Activated T-helper 2 cell treated with anti-CD3 and anti-CD28 coated beads, Interferon-gamma antibody, Interleukin-2, Interleukin-4, amounts not matched to agents 10 μg/mL and 5 μg/mL and 100 μg/mL, durations not matched to agents 14 hours and 24 hours and 36 hours (primary cell): ENCODE measurements at regions of chr9 and their contacts with region 1.

Region 1: GRCh38 chr9:15882328-15882727 is 329.5 kb downstream of the CCDC171 start:
- DNase-seq: no peak
- H3K4me3 Mint-ChIP-seq: no peak overlapping the region
- H3K27ac Mint-ChIP-seq: no peak overlapping the region
- H3K4me1 Mint-ChIP-seq: no peaks in the 10 kb centered on the region
- H3K27me3 Mint-ChIP-seq: no peaks in the 10 kb centered on the region

Region 2: DNA sequence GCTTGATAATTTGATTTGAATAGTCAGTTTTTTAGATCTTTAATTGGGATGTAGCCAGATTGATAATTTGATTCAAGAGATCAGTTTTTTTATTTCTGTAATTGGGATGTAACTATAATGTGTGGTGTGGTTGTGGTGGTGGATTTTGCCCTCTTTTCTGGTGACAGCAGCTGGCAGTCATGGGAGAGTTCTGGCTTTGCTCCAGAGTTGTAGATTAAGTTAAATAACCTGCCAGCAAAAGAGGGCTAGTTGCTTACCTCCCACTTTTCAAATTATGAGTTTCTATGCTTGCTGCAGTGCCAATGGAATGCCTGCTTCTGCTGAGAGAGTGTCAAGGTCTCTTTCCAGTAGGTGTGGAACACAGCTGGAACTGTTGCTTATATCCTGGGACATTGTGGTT is 14.3 kb before region 1 on chr9:
- intact Hi-C with region 1: loop called (anchors 1 kb)
- DNase-seq: no peak
- H3K4me3 Mint-ChIP-seq: no peak overlapping the region
- H3K27ac Mint-ChIP-seq: no peak overlapping the region
- H3K4me1 Mint-ChIP-seq: no peaks in the 10 kb centered on the region
- H3K27me3 Mint-ChIP-seq: no peaks in the 10 kb centered on the region

Region 3: DNA sequence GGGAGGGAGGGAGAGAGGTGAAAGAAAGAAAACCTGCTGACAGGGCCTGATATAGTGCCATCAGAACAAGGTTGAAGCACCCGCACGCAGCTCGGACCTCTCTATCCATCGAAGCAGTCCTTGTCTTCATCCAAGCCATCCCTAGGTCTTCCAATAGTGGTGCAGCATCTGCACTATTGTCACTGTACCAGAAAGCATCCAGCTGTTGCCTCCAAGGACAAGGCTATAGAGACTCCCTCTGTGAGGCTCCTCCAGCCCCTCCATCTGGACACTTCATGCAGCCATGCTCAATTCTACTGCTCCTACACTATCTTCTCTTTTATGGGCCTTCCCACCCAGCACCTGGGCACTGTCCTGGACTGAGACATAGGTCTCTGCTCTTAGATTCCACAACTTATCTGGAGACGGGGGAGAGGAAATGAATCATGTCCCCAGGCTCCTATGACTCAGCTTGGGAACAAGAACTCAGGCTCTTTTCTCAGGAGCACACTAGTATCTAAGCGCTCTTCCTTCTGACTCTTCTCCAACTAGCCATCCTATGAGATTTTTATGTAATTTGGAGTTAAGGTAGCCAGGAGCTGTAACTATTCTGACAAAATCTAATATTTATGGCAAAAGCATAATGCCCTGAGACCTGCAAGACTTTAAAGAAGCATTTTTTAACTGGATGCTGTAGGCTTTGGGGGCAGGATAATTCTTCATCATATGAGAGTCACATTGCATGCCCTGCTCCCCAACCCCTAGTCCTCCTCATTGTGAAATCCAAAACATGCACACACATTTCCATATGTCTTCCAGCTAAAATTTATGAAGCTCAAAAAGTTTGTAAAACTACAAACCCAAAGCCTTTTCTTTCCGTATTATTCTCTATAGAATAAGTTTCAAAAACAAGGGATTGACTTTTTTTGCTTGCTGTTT is 117.4 kb after region 1 on chr9:
- intact Hi-C with region 1: no loop called
- DNase-seq: no peak
- H3K4me3 Mint-ChIP-seq: no peak overlapping the region
- H3K27ac Mint-ChIP-seq: no peak overlapping the region
- H3K4me1 Mint-ChIP-seq: no peaks in the 10 kb centered on the region
- H3K27me3 Mint-ChIP-seq: no peaks in the 10 kb centered on the region